ENCODE measurements at regions of chr16 and their contacts with region 1.

Region 1: DNA sequence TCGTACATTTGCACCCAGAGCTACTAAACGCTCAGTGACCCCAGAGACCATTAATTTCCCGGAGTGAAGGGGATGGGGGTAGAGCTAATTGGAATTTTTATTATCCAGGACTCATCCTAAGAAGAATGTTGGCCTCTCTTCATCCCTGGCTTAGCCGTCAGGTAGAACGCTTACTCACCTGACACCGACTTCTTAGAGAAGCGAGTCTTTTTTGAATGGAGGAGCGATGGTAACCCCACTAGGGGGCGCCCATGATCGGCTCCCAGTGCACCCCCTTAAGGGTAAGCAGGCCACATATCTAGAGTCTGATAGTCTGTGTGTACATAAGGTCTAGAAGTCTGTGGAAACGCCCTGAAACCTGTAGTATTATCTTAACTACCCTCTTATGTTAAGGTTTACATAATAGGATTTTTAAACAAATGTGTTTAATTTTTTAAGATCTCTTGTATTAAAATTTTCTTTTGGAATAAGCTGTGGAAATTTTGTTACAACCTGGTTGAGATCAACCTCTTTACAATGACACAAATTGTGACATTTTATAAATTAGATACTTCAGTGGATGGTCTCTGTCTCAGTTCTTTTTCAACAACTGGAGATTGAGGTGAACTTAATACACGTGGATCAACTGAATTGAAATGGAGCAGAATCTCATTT is 229.8 kb downstream of the CPPED1 start:
- DNase-seq: peak in 1 of 2 experiments; percentile 87
- H3K4me3 ChIP-seq: no peak overlapping the region
- H3K27ac ChIP-seq: peak overlapping the region; percentile 34
- H3K4me1 ChIP-seq: peaks cover 8% of the 10 kb centered on the region
- H3K27me3 ChIP-seq: no peaks in the 10 kb centered on the region
- CTCF ChIP-seq: peak; percentile 88

Region 2: DNA sequence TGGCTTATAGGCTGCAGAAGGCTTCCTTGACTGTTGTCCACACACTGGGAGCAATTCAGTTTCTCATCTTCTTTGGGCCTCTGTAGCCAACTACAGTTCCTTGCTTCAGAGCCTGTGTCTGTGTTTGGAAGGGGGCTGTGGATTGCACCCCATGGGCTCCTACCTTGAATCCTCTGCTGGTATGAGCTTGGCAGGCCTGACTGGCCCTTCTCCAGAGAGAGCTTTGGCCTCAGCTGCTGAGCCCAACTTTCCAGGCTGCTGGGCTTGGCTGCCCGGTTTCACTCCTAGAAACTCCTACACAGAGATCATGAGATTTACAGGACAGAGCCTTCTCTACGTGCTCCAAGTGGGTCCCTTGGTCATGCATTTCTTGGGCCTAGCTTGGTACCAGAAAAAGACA is 242.9 kb before region 1 on chr16:
- CTCF ChIA-PET with region 1: no interaction called
- POLR2A ChIA-PET with region 1: no interaction called
- intact Hi-C with region 1: no loop called
- DNase-seq: no peak
- H3K4me3 ChIP-seq: no peak overlapping the region
- H3K27ac ChIP-seq: no peak overlapping the region
- H3K4me1 ChIP-seq: no peaks in the 10 kb centered on the region
- H3K27me3 ChIP-seq: no peaks in the 10 kb centered on the region
- CTCF ChIP-seq: no peak

Region 3: GRCh38 chr16:12436201-12436657 is 137.6 kb before region 1 on chr16:
- CTCF ChIA-PET with region 1: no interaction called
- POLR2A ChIA-PET with region 1: no interaction called
- intact Hi-C with region 1: no loop called
- DNase-seq: no peak
- H3K4me3 ChIP-seq: no peak overlapping the region
- H3K27ac ChIP-seq: no peak overlapping the region
- H3K4me1 ChIP-seq: no peaks in the 10 kb centered on the region
- H3K27me3 ChIP-seq: no peaks in the 10 kb centered on the region
- CTCF ChIP-seq: no peak

Region 4: DNA sequence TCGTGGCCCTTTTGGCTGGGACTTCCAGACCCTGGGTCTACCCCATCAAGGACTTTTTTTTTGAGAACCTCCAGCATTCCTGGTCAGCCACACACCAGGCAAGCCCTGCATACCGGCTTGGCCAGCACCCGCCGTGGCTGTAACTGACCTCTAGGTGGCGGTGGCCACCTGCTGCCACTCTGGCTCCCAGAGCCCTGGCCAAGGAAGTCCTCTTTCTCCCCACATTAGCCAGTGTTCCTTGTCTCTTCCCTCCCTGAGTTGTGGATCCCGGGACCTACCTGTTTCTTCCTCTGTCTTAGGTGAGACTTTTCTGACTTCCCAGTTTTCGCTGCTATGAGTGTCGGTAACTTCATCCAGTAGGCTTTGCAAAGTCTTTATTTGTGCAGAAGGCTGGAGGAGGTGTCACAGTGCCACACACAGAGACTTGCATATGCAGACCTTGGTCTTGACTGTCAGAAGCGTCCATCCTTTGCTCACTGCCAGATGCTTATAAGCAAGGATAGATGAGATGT is 118.5 kb before region 1 on chr16:
- CTCF ChIA-PET with region 1: no interaction called
- POLR2A ChIA-PET with region 1: no interaction called
- intact Hi-C with region 1: loop called (anchors 5 kb)
- DNase-seq: peak; percentile 38 to 80
- H3K4me3 ChIP-seq: no peak overlapping the region
- H3K27ac ChIP-seq: no peak overlapping the region
- H3K4me1 ChIP-seq: no peaks in the 10 kb centered on the region
- H3K27me3 ChIP-seq: no peaks in the 10 kb centered on the region
- CTCF ChIP-seq: peak; percentile 95

Region 5: GRCh38 chr16:12613131-12613991 is 39.5 kb after region 1 on chr16:
- CTCF ChIA-PET with region 1: no interaction called
- POLR2A ChIA-PET with region 1: no interaction called
- intact Hi-C with region 1: loop called (anchors 1 kb)
- DNase-seq: peak; percentile 89 to 97
- H3K4me3 ChIP-seq: peak overlapping the region; percentile 46; the same call in 1 of the 2 replicates
- H3K27ac ChIP-seq: peak overlapping the region; percentile 100
- H3K4me1 ChIP-seq: peaks cover 55% of the 10 kb centered on the region
- H3K27me3 ChIP-seq: no peaks in the 10 kb centered on the region
- CTCF ChIP-seq: no peak

Region 6: GRCh38 chr16:12637002-12637401 is 63.1 kb after region 1 on chr16:
- CTCF ChIA-PET with region 1: no interaction called
- POLR2A ChIA-PET with region 1: no interaction called
- intact Hi-C with region 1: no loop called
- DNase-seq: no peak
- H3K4me3 ChIP-seq: no peak overlapping the region
- H3K27ac ChIP-seq: no peak overlapping the region
- H3K4me1 ChIP-seq: no peaks in the 10 kb centered on the region
- H3K27me3 ChIP-seq: no peaks in the 10 kb centered on the region
- CTCF ChIP-seq: no peak

Region 7: DNA sequence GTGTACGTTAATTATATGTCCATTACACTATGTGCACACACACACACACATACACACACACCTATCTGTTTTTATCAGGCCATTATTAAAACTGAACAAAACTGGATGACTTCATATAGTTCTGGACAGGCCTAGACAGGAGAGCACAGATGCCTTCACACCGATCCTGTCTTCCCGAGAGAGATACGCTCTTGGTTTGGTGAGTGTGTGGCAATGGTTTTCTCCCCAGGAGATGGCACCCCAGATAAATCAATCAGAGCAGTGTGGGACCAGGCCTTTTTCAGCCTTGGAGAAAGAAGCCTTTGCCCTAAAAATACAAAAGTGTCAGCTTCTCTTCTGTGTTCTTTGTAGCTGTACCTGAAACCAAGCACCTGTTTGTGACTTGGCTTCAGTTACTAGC is 146.1 kb after region 1 on chr16:
- CTCF ChIA-PET with region 1: no interaction called
- POLR2A ChIA-PET with region 1: interaction called, 5 read pairs
- intact Hi-C with region 1: loop called (anchors 10 kb)
- DNase-seq: no peak
- H3K4me3 ChIP-seq: no peak overlapping the region
- H3K27ac ChIP-seq: no peak overlapping the region
- H3K4me1 ChIP-seq: no peaks in the 10 kb centered on the region
- H3K27me3 ChIP-seq: no peaks in the 10 kb centered on the region
- CTCF ChIP-seq: no peak

Region 8: DNA sequence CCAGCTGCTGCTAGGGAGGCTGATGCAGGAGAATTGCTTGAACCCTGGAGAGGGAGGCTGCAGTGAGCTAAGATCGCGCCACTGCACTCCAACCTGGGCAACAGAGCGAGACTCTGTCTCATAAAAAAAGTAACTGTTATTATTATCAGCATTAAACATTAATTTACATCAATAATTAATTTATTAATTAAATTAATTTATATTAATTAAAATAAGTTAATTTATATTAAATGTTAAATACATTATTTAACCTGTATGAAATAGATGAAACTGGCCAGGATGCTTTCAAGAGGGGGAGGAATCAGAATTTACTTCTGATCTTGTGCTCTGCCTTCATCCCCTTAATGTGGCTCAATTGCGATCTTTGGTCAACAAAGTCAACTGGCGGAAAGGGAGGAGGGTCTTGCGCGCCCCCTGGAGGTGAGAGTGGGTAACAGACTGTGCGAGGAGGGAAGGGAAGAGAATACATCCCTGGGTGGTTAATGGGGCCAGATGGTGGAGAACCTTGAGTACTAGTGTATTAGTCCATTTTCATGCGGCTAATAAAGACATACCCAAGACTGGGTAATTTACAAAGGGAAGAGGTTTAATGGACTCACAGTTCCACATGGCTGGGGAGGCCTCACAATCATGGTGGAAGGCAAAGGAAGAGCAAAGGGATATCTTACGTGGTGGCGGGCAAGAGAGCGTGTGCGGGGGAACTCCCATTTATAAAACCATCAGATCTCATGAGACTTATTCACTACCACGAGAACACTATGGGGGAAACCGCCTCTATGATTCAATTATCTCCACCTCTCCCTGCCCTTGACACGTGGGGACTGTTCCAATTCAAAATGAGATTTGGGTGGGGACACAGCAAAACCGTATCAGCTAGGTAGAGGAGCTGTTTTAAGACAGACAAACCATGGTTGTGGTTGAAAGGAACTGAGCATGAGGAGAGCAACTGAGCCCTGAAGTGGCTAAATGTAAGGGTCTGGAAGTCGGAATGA is 245.6 kb after region 1 on chr16:
- CTCF ChIA-PET with region 1: no interaction called
- POLR2A ChIA-PET with region 1: no interaction called
- intact Hi-C with region 1: no loop called
- DNase-seq: no peak
- H3K4me3 ChIP-seq: no peak overlapping the region
- H3K27ac ChIP-seq: no peak overlapping the region
- H3K4me1 ChIP-seq: peaks cover 21% of the 10 kb centered on the region
- H3K27me3 ChIP-seq: no peaks in the 10 kb centered on the region
- CTCF ChIP-seq: peak; percentile 57

Region 9: GRCh38 chr16:13453938-13454553 is 880.2 kb after region 1 on chr16:
- CTCF ChIA-PET with region 1: no interaction called
- POLR2A ChIA-PET with region 1: no interaction called
- intact Hi-C with region 1: loop called (anchors 5 kb)
- DNase-seq: peak in 1 of 2 experiments; percentile 56
- H3K4me3 ChIP-seq: no peak overlapping the region
- H3K27ac ChIP-seq: no peak overlapping the region
- H3K4me1 ChIP-seq: no peaks in the 10 kb centered on the region
- H3K27me3 ChIP-seq: no peaks in the 10 kb centered on the region
- CTCF ChIP-seq: peak; percentile 90

Region 10: DNA sequence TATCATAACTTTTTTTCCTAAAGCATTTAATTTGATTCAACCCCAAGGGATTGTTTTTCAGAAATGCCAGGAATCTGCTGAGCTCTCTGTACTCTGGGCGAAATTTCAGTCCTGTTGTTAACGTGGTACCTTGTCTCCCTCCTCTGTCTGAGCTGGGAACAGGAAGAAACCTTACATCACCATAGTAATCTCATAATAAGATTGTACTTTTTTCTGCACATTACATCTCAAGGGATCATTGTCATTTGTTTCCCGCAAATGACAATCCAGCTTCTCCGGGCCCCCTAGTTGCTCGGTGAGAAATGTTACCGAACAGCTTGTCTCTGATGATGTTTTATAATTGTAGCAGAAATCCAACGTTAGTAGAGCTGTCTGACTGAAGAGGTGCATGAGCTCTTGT is 1193.4 kb after region 1 on chr16:
- CTCF ChIA-PET with region 1: no interaction called
- POLR2A ChIA-PET with region 1: no interaction called
- intact Hi-C with region 1: loop called (anchors 1 kb)
- DNase-seq: peak in 1 of 2 experiments; percentile 11
- H3K4me3 ChIP-seq: no peak overlapping the region
- H3K27ac ChIP-seq: no peak overlapping the region
- H3K4me1 ChIP-seq: no peaks in the 10 kb centered on the region
- H3K27me3 ChIP-seq: peaks cover 73% of the 10 kb centered on the region
- CTCF ChIP-seq: 0 out of 2 replicates have a peak, but pooled peaks have one; percentile 33